Right cardiac atrium (tissue), 5 donors: ENCODE measurements at regions of chr22 and their contacts with region 1.

Region 1: GRCh38 chr22:40679964-40680818 is 907 bp downstream of the MCHR1 start:
- DNase-seq: no peak
- ATAC-seq: peak; percentile 18 to 19
- H3K4me3 ChIP-seq: peak overlapping the region; percentile 36
- H3K27ac ChIP-seq: peak overlapping the region; percentile 22
- H3K4me1 ChIP-seq: peaks cover 8% of the 10 kb centered on the region
- H3K27me3 ChIP-seq: no peaks in the 10 kb centered on the region

Region 2: GRCh38 chr22:40509401-40510134 is 170.6 kb before region 1 on chr22:
- intact Hi-C with region 1: no loop called
- DNase-seq: peak; percentile 67 to 87 (median 70)
- ATAC-seq: peak; percentile 75 to 83
- H3K4me3 ChIP-seq: no peak overlapping the region
- H3K27ac ChIP-seq: no peak overlapping the region
- H3K4me1 ChIP-seq: peaks cover 2% of the 10 kb centered on the region
- H3K27me3 ChIP-seq: no peaks in the 10 kb centered on the region

Region 3: GRCh38 chr22:40757071-40757470 is 76.9 kb after region 1 on chr22:
- intact Hi-C with region 1: loop called (anchors 2 to 10 kb)
- DNase-seq: no peak
- ATAC-seq: no peak
- H3K4me3 ChIP-seq: no peak overlapping the region
- H3K27ac ChIP-seq: no peak overlapping the region
- H3K4me1 ChIP-seq: no peaks in the 10 kb centered on the region
- H3K27me3 ChIP-seq: no peaks in the 10 kb centered on the region

Region 4: DNA sequence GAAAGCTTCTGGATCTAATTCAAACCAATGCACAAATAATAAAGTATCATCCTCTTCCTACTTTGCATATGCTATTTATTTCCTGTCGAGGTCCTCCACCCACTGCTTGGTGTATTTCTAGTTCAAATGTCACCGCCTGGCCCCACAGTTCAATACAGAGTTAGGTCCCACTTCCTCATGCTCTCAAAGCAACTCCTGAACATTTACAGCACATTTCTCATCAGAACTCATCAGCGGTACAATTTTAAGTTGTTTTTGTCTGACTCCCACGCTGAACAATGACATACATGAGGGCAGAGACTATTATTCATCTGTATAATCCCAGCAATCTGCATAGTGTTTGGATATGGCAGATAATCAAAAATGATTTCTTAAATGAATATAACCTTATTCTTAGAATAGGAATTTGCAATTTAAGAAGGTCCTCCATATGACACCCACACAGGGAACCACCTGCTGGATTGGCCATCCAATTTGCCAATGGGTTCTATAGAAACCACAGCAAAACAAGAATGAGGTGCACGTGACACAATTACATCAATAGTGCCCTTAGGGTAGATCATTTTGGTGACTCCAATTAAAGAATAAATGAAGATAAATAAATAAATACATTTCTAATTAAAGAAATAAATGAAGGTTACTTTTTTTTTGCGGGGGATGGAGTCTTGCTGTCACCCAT is 84.7 kb after region 1 on chr22:
- intact Hi-C with region 1: loop called in 1 of 4 experiments (anchors 2 kb)
- DNase-seq: no peak
- ATAC-seq: no peak
- H3K4me3 ChIP-seq: no peak overlapping the region
- H3K27ac ChIP-seq: no peak overlapping the region
- H3K4me1 ChIP-seq: no peaks in the 10 kb centered on the region
- H3K27me3 ChIP-seq: no peaks in the 10 kb centered on the region